Activated naive CD4-positive, alpha-beta T cell treated with anti-CD3 and anti-CD28 coated beads for 36 hours (primary cell): ENCODE measurements at regions of chr3 and their contacts with region 1.

Region 1: GRCh38 chr3:125374996-125375941 is at the start of gene ZNF148:
- DNase-seq: peak; percentile 91
- H3K4me3 Mint-ChIP-seq: peak within 1 kb of the TSS; percentile 92
- H3K27ac Mint-ChIP-seq: peak within 1 kb of the TSS; percentile 96
- H3K4me1 Mint-ChIP-seq: peaks cover 34% of the 10 kb centered on the region
- H3K27me3 Mint-ChIP-seq: no peaks in the 10 kb centered on the region
- total RNA-seq, gene ZNF148: 20.3 to 22.2 TPM

Region 2: DNA sequence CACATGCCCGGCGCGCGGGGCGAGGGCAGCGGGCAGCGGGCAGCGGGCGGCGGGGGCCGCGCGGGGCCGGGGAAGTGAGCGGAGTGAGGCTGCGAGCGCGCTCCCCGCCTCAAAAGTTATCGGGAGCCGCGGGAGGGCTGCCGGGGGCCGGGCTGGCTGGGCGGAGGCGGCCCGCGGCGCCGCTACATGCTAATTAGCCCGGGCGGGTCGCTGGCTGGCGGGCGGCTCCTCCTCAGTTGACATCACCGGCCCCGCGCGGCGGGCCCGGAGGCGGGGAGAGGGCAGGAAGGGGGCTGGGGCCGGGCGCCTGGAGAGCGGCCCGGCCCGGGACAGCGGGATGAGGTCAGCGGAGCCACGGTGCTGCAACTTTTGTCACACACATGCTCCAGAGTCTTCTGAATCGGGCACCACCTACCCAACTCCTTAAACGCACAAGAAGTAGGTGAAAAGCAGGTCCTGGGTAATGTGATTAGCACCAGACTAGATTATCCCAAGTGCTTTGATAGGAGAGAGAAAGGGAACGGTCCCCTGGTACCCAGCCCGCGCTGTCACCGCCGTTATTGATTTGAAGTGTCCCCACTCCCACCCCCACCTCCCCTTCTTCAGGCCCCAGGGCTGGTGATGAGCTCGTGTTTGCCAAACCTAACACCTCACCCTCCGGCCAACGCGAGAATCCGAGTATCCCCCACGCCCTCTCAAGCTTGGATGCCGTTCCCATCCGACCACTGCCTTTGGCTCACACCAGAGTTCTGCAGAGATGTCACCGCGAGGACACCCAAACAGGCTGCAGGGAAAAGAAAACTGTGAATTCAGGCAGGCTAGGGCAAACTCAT is 319.1 kb before region 1 on chr3 and contains the start of gene HEG1:
- CTCF ChIA-PET with region 1: no interaction called
- intact Hi-C with region 1: loop called (anchors 2 kb)
- DNase-seq: peak; percentile 78
- H3K4me3 Mint-ChIP-seq: peak within 1 kb of the TSS; percentile 80
- H3K27ac Mint-ChIP-seq: peak within 1 kb of the TSS; percentile 11
- H3K4me1 Mint-ChIP-seq: peaks cover 44% of the 10 kb centered on the region
- H3K27me3 Mint-ChIP-seq: no peaks in the 10 kb centered on the region
- total RNA-seq, gene HEG1: 5.8 TPM

Region 3: GRCh38 chr3:125231895-125232294 is 143.4 kb before region 1 on chr3:
- CTCF ChIA-PET with region 1: no interaction called
- intact Hi-C with region 1: loop called (anchors 5 kb)
- DNase-seq: no peak
- H3K4me3 Mint-ChIP-seq: no peak overlapping the region
- H3K27ac Mint-ChIP-seq: peak overlapping the region; percentile 36
- H3K4me1 Mint-ChIP-seq: peaks cover 20% of the 10 kb centered on the region
- H3K27me3 Mint-ChIP-seq: no peaks in the 10 kb centered on the region

Region 4: DNA sequence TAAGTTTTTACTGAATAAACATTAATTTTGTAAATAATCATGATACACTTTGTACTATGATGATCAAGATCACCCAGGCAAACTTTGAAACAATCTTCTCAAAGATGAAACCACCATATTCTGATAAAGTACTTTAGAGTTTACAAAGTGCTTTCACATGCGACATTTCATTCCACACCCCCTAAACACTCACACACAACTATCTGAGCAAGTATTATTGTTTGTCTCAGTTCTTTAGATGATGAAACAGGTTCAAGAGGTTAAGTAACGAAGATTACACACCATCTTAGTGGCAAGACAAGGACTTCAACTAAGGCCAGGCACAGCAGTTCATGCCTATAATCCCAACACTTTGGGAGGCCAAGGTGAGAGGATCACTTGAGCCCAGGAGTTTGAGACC is 37.8 kb before region 1 on chr3:
- CTCF ChIA-PET with region 1: no interaction called
- intact Hi-C with region 1: loop called (anchors 2 kb)
- DNase-seq: no peak
- H3K4me3 Mint-ChIP-seq: no peak overlapping the region
- H3K27ac Mint-ChIP-seq: peak overlapping the region; percentile 35
- H3K4me1 Mint-ChIP-seq: peaks cover 53% of the 10 kb centered on the region
- H3K27me3 Mint-ChIP-seq: no peaks in the 10 kb centered on the region

Region 5: DNA sequence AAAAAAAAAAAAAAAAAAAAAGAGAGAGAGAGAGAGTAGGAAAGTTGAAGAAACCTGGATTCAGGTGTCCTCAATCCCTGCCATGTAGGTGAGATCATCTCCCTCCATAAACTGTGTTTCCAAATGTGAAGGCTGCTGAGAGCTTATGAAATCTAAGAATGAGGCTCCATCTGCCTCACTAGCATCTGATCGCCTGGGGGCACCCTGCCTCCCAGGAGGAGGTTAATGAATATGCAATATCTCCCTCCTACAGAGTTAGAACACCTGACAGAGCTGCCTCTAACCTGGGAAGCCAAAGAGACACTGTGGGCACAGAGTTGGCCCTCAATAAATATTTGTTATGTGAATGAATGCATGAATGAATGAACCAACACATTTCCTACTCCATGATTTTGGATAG is 23.7 kb after region 1 on chr3:
- CTCF ChIA-PET with region 1: no interaction called
- intact Hi-C with region 1: no loop called
- DNase-seq: no peak
- H3K4me3 Mint-ChIP-seq: no peak overlapping the region
- H3K27ac Mint-ChIP-seq: no peak overlapping the region
- H3K4me1 Mint-ChIP-seq: no peaks in the 10 kb centered on the region
- H3K27me3 Mint-ChIP-seq: peaks cover 4% of the 10 kb centered on the region

Region 6: GRCh38 chr3:125410922-125411321 is 35.7 kb after region 1 on chr3:
- CTCF ChIA-PET with region 1: no interaction called
- intact Hi-C with region 1: no loop called
- DNase-seq: no peak
- H3K4me3 Mint-ChIP-seq: no peak overlapping the region
- H3K27ac Mint-ChIP-seq: no peak overlapping the region
- H3K4me1 Mint-ChIP-seq: no peaks in the 10 kb centered on the region
- H3K27me3 Mint-ChIP-seq: peaks cover 6% of the 10 kb centered on the region

Region 7: GRCh38 chr3:125437631-125438435 is 62.6 kb after region 1 on chr3:
- CTCF ChIA-PET with region 1: no interaction called
- intact Hi-C with region 1: loop called (anchors 5 kb)
- DNase-seq: peak; percentile 70
- H3K4me3 Mint-ChIP-seq: no peak overlapping the region
- H3K27ac Mint-ChIP-seq: no peak overlapping the region
- H3K4me1 Mint-ChIP-seq: no peaks in the 10 kb centered on the region
- H3K27me3 Mint-ChIP-seq: no peaks in the 10 kb centered on the region